HCT116 (cell line): ENCODE measurements at regions of chr5 and their contacts with region 1.

Region 1: GRCh38 chr5:33588654-33589372 is 148.0 kb downstream of the TARS1 start:
- DNase-seq: peak; percentile 47
- ATAC-seq: peak; percentile 100
- H3K4me3 ChIP-seq: no peak overlapping the region
- H3K27ac ChIP-seq: no peak overlapping the region
- H3K4me1 ChIP-seq: no peaks in the 10 kb centered on the region
- H3K27me3 ChIP-seq: peaks cover 8% of the 10 kb centered on the region
- CTCF ChIP-seq: peak; percentile 24 to 93 (median 92); a peak in 4 of 6 replicates
- POLR2A ChIP-seq: no peak
- RAD21 ChIP-seq: peak; percentile 51

Region 2: GRCh38 chr5:33440482-33441240 is 148.2 kb before region 1 on chr5 and contains the start of gene TARS1:
- CTCF ChIA-PET with region 1: interaction called, 6 read pairs
- POLR2A ChIA-PET with region 1: no interaction called
- RAD21 ChIA-PET with region 1: no interaction called
- intact Hi-C with region 1: loop called (anchors 10 kb)
- DNase-seq: peak; percentile 100
- ATAC-seq: peak; percentile 97
- H3K4me3 ChIP-seq: peak within 1 kb of the TSS; percentile 76 to 97
- H3K27ac ChIP-seq: peak within 1 kb of the TSS; percentile 92
- H3K4me1 ChIP-seq: peaks cover 13 to 22% of the 10 kb centered on the region in 2 experiments; a peak in 3 of 4 replicates
- H3K27me3 ChIP-seq: no peaks in the 10 kb centered on the region
- CTCF ChIP-seq: no peak
- POLR2A ChIP-seq: peak; percentile 46
- RAD21 ChIP-seq: no peak
- total RNA-seq, gene TARS1: 291 TPM

Region 3: DNA sequence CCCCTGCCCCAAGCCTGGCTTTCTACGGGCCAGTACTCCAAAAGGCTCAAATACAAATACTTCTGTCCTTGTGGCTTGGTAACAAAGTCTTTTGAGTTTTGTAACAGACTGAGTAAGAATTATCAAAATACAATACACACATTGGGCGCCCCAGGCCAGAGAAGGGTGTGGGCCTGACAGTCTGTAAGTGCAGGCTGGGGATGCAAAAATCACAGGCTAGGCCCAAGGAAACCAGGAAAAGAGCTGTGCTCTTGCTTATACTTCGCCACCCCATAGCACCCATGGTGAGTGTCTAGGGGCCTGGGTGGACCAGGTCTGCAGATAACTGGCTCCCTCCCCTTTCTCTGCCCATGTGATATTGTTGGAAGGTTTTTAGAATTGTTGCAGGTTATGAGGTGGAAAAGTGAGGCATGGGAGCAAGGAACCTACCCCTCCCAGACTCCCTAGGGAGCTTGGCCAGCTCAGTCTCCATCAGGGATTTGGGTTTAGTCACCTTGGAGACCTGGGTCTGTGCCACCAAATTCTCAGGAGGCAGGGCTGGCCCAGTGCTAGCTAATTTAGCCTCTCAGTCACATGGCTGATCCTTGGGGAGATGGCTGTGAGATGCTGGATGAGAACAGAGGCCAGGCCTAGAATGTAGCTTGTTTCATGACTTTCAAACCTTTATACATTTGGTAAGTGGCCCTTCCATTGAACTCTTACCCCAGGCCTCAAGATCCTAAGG is 75.2 kb before region 1 on chr5:
- CTCF ChIA-PET with region 1: no interaction called
- POLR2A ChIA-PET with region 1: no interaction called
- RAD21 ChIA-PET with region 1: no interaction called
- intact Hi-C with region 1: no loop called
- DNase-seq: no peak
- ATAC-seq: no peak
- H3K4me3 ChIP-seq: no peak overlapping the region
- H3K27ac ChIP-seq: no peak overlapping the region
- H3K4me1 ChIP-seq: no peaks in the 10 kb centered on the region
- H3K27me3 ChIP-seq: no peaks in the 10 kb centered on the region; the same call in 1 of the 2 replicates
- CTCF ChIP-seq: no peak
- POLR2A ChIP-seq: no peak
- RAD21 ChIP-seq: no peak

Region 4: DNA sequence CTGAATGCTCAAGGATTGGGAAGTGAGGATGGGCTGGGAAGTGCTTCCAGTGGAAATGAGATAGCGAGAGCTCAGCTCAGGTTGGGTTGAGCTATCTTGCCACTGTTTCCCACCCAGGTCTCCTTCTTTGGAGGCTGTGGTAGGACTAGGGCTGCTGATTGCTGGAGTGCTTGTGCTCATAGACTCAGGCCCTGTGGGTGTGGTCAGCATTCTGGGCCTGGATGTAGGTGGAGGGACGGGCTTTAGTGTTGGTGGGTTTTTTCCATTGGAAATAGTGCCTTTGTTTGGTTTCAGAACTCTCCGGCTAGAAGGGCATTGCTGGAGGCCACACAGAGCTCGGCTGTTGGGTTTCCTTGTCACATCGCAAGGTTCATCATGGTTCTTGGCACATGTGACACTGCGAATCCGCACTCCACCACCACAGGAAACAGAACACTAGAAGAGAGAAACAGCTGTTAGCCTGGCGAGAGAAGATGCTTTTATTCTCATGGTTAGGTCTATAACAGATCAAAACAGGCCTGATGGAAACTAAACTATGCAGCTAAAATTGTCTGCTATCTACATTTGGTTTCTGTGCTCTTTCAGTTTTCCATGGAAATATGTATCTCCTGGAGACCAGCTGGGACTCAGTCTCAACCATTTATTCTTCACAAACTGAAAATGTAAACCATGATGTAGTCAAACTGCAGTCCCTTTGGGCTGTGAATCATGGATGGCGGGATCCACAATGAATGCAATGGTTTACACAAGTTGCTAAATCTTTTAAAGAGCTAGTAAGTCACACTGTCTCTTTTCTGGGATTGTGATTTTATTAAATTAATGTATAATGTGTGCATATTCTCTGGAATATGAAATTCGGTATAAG is 11.9 kb before region 1 on chr5:
- CTCF ChIA-PET with region 1: interaction called, 11 read pairs
- POLR2A ChIA-PET with region 1: no interaction called
- RAD21 ChIA-PET with region 1: no interaction called
- intact Hi-C with region 1: no loop called
- DNase-seq: no peak
- ATAC-seq: no peak
- H3K4me3 ChIP-seq: no peak overlapping the region
- H3K27ac ChIP-seq: no peak overlapping the region
- H3K4me1 ChIP-seq: no peaks in the 10 kb centered on the region
- H3K27me3 ChIP-seq: peaks cover 28% of the 10 kb centered on the region
- CTCF ChIP-seq: no peak
- POLR2A ChIP-seq: no peak
- RAD21 ChIP-seq: no peak